PC-9 (cell line): ENCODE measurements at regions of chr1 and their contacts with region 1.

Region 1: DNA sequence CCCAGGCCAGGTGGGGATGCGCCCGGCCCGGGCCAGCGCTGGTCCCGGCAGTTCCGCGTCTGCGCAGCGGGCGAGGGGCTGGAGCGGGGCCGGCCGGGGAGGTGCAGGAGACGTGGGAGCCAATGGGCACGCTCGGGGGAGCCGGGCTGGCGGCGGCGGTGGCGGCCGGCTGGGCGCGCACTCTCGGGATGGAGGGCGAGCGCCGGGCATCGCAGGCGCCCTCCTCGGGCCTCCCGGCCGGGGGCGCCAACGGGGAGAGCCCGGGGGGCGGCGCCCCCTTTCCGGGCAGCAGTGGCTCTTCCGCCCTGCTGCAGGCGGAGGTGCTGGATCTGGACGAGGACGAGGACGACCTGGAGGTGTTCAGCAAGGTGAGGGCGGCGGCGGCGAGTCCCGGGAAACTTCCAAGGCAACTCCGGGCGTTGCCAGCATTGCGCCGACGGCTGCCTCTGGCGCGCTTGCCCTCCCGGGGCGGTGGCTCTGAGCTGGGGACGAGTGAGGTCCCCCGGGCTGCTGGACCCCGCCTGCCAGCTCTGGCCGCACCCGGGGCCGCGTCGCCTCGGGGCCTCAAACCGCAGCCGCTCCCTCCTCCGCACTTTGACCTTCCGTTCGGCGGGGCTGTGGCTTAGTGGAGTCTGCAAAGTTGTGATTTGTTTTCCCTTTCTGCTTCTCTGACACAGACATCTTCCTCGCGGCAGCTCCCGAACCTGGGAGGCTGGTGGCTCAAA is at the start of gene SNX7:
- DNase-seq: peak; percentile 67 to 88
- H3K4me3 ChIP-seq: peak within 1 kb of the TSS; percentile 70
- H3K27ac ChIP-seq: peak within 1 kb of the TSS; percentile 49
- H3K4me1 ChIP-seq: peaks cover 24% of the 10 kb centered on the region
- H3K27me3 ChIP-seq: no peaks in the 10 kb centered on the region
- CTCF ChIP-seq: peak; percentile 37; the same call in 1 of the 2 replicates
- total RNA-seq, gene SNX7: 25.3 and 25.4 TPM in 2 replicates

Region 2: GRCh38 chr1:97581614-97582051 is 1080.1 kb before region 1 on chr1:
- CTCF ChIA-PET with region 1: no interaction called
- POLR2A ChIA-PET with region 1: interaction called, 11 read pairs
- intact Hi-C with region 1: no loop called
- DNase-seq: peak; percentile 40 to 74
- H3K4me3 ChIP-seq: no peak overlapping the region
- H3K27ac ChIP-seq: peak overlapping the region; percentile 7; the same call in 1 of the 2 replicates
- H3K4me1 ChIP-seq: no peaks in the 10 kb centered on the region
- H3K27me3 ChIP-seq: no peaks in the 10 kb centered on the region
- CTCF ChIP-seq: no peak

Region 3: DNA sequence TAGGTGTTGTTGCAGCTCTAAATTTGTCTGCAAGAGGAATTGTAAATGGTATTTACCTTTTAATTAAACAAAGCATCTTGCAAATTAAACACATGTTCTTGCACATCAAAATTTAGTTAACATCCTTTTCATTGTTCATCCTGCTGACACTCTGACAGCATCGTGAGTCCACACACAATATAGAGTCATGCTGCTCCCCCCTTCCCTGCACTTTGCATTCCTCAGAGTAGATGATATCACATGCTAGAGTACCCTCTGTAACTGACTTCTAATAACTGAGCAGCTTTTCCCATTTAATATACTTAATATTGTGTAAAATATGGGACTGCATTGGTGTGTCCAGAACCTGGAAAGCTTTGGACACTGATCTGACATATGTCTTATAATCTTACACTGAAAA is 602.1 kb before region 1 on chr1:
- CTCF ChIA-PET with region 1: no interaction called
- POLR2A ChIA-PET with region 1: no interaction called
- intact Hi-C with region 1: loop called (anchors 5 kb)
- DNase-seq: no peak
- H3K4me3 ChIP-seq: no peak overlapping the region
- H3K27ac ChIP-seq: no peak overlapping the region
- H3K4me1 ChIP-seq: no peaks in the 10 kb centered on the region
- H3K27me3 ChIP-seq: no peaks in the 10 kb centered on the region
- CTCF ChIP-seq: no peak

Region 4: GRCh38 chr1:98478121-98478520 is 183.6 kb before region 1 on chr1:
- CTCF ChIA-PET with region 1: no interaction called
- POLR2A ChIA-PET with region 1: no interaction called
- intact Hi-C with region 1: loop called (anchors 10 kb)
- DNase-seq: no peak
- H3K4me3 ChIP-seq: no peak overlapping the region
- H3K27ac ChIP-seq: no peak overlapping the region
- H3K4me1 ChIP-seq: no peaks in the 10 kb centered on the region
- H3K27me3 ChIP-seq: no peaks in the 10 kb centered on the region
- CTCF ChIP-seq: no peak